ENCODE measurements at regions of chr2 and their contacts with region 1.

Region 1: GRCh38 chr2:24613154-24613814 is 122.2 kb downstream of the NCOA1 start:
- DNase-seq: peak; percentile 59
- ATAC-seq: peak; percentile 61
- H3K4me3 ChIP-seq: no peak overlapping the region
- H3K27ac ChIP-seq: no peak overlapping the region
- H3K4me1 ChIP-seq: no peaks in the 10 kb centered on the region
- H3K27me3 ChIP-seq: no peaks in the 10 kb centered on the region
- CTCF ChIP-seq: peak; percentile 70

Region 2: GRCh38 chr2:24586955-24587354 is 26.3 kb before region 1 on chr2:
- CTCF ChIA-PET with region 1: no interaction called
- POLR2A ChIA-PET with region 1: interaction called, 10 read pairs
- intact Hi-C with region 1: no loop called
- DNase-seq: no peak
- ATAC-seq: no peak
- H3K4me3 ChIP-seq: no peak overlapping the region
- H3K27ac ChIP-seq: no peak overlapping the region
- H3K4me1 ChIP-seq: no peaks in the 10 kb centered on the region
- H3K27me3 ChIP-seq: no peaks in the 10 kb centered on the region
- CTCF ChIP-seq: no peak